ENCODE measurements at regions of chr7 and their contacts with region 1.

Region 1: DNA sequence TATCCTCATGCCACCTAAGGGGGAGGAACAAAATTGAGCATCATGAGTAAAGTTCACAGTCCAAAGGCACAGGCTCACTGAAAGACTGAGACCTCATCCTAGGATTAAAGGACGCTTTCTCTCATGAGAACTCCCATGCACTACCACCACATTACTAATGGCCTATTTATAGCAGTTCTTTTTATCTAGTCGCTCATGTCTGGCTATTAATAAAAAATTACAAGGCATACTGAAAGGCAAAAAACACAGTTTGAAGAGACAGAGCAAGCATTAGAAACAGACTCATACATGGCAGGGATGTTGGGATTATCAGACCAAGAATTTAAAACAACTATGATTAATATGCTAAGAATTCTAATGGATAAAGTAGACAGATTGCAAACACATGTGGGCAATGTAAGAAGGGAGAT is 46.0 kb upstream of the CDK13 start:
- DNase-seq: no peak
- H3K4me3 Mint-ChIP-seq: no peak overlapping the region
- H3K27ac Mint-ChIP-seq: no peak overlapping the region
- H3K4me1 Mint-ChIP-seq: no peaks in the 10 kb centered on the region
- H3K27me3 Mint-ChIP-seq: peaks cover 16% of the 10 kb centered on the region

Region 2: GRCh38 chr7:39686261-39686924 is 217.7 kb before region 1 on chr7:
- CTCF ChIA-PET with region 1: no interaction called
- POLR2A ChIA-PET with region 1: no interaction called
- DNase-seq: no peak
- H3K4me3 Mint-ChIP-seq: no peak overlapping the region
- H3K27ac Mint-ChIP-seq: no peak overlapping the region
- H3K4me1 Mint-ChIP-seq: peaks cover 4% of the 10 kb centered on the region
- H3K27me3 Mint-ChIP-seq: no peaks in the 10 kb centered on the region

Region 3: GRCh38 chr7:39754326-39755120 is 149.6 kb before region 1 on chr7:
- CTCF ChIA-PET with region 1: no interaction called
- POLR2A ChIA-PET with region 1: no interaction called
- DNase-seq: no peak
- H3K4me3 Mint-ChIP-seq: no peak overlapping the region
- H3K27ac Mint-ChIP-seq: no peak overlapping the region
- H3K4me1 Mint-ChIP-seq: peaks cover 9% of the 10 kb centered on the region
- H3K27me3 Mint-ChIP-seq: no peaks in the 10 kb centered on the region

Region 4: GRCh38 chr7:40057292-40057691 is 153.2 kb after region 1 on chr7:
- CTCF ChIA-PET with region 1: interaction called, 11 read pairs
- POLR2A ChIA-PET with region 1: no interaction called
- DNase-seq: no peak
- H3K4me3 Mint-ChIP-seq: no peak overlapping the region
- H3K27ac Mint-ChIP-seq: peak overlapping the region; percentile 0
- H3K4me1 Mint-ChIP-seq: peaks cover 10% of the 10 kb centered on the region
- H3K27me3 Mint-ChIP-seq: no peaks in the 10 kb centered on the region

Region 5: GRCh38 chr7:40175725-40176510 is 271.8 kb after region 1 on chr7:
- CTCF ChIA-PET with region 1: no interaction called
- POLR2A ChIA-PET with region 1: no interaction called
- DNase-seq: no peak
- H3K4me3 Mint-ChIP-seq: no peak overlapping the region
- H3K27ac Mint-ChIP-seq: no peak overlapping the region
- H3K4me1 Mint-ChIP-seq: no peaks in the 10 kb centered on the region
- H3K27me3 Mint-ChIP-seq: peaks cover 1% of the 10 kb centered on the region